SK-N-SH (cell line): ENCODE measurements at regions of chr3 and their contacts with region 1.

Region 1: DNA sequence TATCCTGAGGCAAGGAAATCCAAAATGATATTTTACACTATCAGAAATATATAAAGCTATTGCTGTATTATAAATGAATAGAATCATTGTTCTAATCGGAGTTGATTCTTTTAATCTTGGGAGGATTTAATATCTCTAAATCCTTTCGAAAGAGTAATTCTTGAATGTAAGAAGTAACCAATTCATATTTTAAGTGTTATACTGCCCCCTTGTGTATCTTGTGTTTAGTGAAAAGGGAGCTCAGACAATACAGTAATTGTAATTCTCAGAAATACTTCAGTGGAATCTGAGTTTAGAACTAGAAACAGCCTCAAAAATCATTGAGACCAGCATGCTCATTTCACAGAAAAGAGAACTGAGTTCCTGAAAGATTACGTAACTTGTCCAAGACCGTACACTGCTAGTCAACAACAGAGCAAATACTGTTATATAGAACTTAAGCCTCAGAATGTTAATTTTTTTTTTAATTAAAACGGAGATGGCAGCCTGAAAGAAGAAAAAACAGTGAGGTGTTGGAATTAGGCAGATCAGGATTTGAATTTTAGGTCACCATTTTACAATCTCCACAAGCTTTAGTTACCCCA is 42.9 kb downstream of the PLCH1 start:
- DNase-seq: peak; percentile 43
- H3K4me3 ChIP-seq: no peak overlapping the region; a peak in 1 of 4 replicates
- H3K27ac ChIP-seq: no peak overlapping the region
- H3K4me1 ChIP-seq: peaks cover 0 to 3% of the 10 kb centered on the region in 2 experiments; a peak in 2 of 4 replicates
- H3K27me3 ChIP-seq: no peaks in the 10 kb centered on the region
- CTCF ChIP-seq: peak; percentile 82
- EP300 ChIP-seq: no peak
- RAD21 ChIP-seq: peak; percentile 82

Region 2: DNA sequence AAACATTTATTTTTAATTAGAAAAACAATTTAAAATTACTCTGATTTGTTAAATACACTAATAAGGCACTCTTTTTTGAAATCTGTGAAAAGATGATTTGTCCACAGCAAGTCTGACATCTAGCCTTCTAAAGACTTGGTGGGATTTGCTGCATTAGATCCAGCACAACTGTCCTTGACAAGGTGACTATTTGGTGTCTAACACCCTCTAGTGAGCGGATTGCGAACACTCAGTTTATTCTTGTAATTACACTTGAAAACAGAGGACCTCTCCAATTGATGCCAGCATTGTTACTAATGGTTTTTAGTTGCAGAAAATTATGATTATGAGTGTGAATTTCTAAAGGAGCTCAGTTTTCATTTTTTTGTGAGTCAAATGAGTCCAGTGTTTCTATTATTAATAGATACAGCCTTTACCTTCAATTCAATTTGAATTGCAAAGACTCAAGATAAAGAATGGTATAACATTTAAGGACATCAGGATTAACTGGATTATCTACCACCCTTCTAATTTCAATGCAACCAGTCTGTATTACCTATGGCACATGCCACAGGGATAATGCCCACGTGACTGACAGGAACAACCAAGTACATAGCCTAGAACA is 378.8 kb before region 1 on chr3:
- CTCF ChIA-PET with region 1: interaction called, 14 read pairs
- POLR2A ChIA-PET with region 1: no interaction called
- DNase-seq: peak; percentile 61
- H3K4me3 ChIP-seq: no peak overlapping the region; a peak in 1 of 4 replicates
- H3K27ac ChIP-seq: no peak overlapping the region
- H3K4me1 ChIP-seq: peaks cover 0 to 8% of the 10 kb centered on the region in 2 experiments; a peak in 2 of 4 replicates
- H3K27me3 ChIP-seq: no peaks in the 10 kb centered on the region
- CTCF ChIP-seq: peak; percentile 83
- EP300 ChIP-seq: no peak
- RAD21 ChIP-seq: peak; percentile 95

Region 3: DNA sequence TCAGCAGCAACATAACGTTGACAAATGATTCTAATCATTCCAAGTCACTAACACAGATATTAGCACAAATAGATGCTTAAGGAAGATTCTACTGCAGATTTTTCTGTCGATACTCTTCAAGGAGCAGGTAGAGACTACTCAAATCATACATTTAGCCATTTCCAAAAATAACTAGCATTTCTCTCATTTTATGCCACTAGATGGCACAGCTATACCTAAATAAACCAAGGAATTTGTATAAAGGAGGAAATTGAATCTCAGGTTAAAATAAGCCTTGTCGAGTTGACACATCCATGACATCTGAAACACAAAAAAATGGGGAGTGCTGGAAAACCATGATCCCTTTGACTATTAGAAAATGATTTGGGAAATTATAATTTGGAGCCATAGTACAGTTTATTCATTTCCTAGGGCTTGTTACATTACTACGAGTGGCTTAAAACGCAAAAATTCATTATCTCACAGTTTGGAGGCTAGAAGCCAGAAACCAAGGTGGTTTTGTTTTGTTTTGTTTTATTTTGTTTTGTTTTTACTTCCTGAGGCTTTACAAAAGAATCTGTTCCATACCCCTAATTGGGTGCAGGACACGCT is 349.0 kb before region 1 on chr3:
- CTCF ChIA-PET with region 1: interaction called, 86 read pairs
- POLR2A ChIA-PET with region 1: no interaction called
- DNase-seq: peak; percentile 31
- H3K4me3 ChIP-seq: no peak overlapping the region
- H3K27ac ChIP-seq: no peak overlapping the region; a peak in 1 of 4 replicates
- H3K4me1 ChIP-seq: no peaks in the 10 kb centered on the region; a peak in 1 of 4 replicates
- H3K27me3 ChIP-seq: no peaks in the 10 kb centered on the region
- CTCF ChIP-seq: peak; percentile 71
- EP300 ChIP-seq: no peak
- RAD21 ChIP-seq: peak; percentile 76

Region 4: GRCh38 chr3:155382396-155383042 is 319.5 kb before region 1 on chr3:
- CTCF ChIA-PET with region 1: interaction called, 124 read pairs
- POLR2A ChIA-PET with region 1: no interaction called
- DNase-seq: peak; percentile 69
- H3K4me3 ChIP-seq: peak overlapping the region in 1 of 2 experiments; percentile 32; a peak in 1 of 4 replicates
- H3K27ac ChIP-seq: peak overlapping the region in 1 of 2 experiments; percentile 67; a peak in 1 of 4 replicates
- H3K4me1 ChIP-seq: peaks cover 0 to 20% of the 10 kb centered on the region in 2 experiments; a peak in 1 of 4 replicates
- H3K27me3 ChIP-seq: no peaks in the 10 kb centered on the region
- CTCF ChIP-seq: peak; percentile 85
- EP300 ChIP-seq: no peak
- RAD21 ChIP-seq: peak; percentile 99

Region 5: GRCh38 chr3:155618543-155618942 is 83.4 kb before region 1 on chr3:
- CTCF ChIA-PET with region 1: no interaction called
- POLR2A ChIA-PET with region 1: no interaction called
- DNase-seq: no peak
- H3K4me3 ChIP-seq: no peak overlapping the region
- H3K27ac ChIP-seq: no peak overlapping the region
- H3K4me1 ChIP-seq: no peaks in the 10 kb centered on the region
- H3K27me3 ChIP-seq: no peaks in the 10 kb centered on the region
- CTCF ChIP-seq: no peak
- EP300 ChIP-seq: no peak
- RAD21 ChIP-seq: no peak

Region 6: GRCh38 chr3:155631323-155632019 is 70.5 kb before region 1 on chr3:
- CTCF ChIA-PET with region 1: no interaction called
- POLR2A ChIA-PET with region 1: no interaction called
- DNase-seq: no peak
- H3K4me3 ChIP-seq: no peak overlapping the region
- H3K27ac ChIP-seq: no peak overlapping the region
- H3K4me1 ChIP-seq: no peaks in the 10 kb centered on the region
- H3K27me3 ChIP-seq: no peaks in the 10 kb centered on the region
- CTCF ChIP-seq: no peak
- EP300 ChIP-seq: no peak
- RAD21 ChIP-seq: no peak

Region 7: GRCh38 chr3:155682426-155683343 is 19.3 kb before region 1 on chr3:
- CTCF ChIA-PET with region 1: interaction called, 13 read pairs
- POLR2A ChIA-PET with region 1: no interaction called
- DNase-seq: no peak
- H3K4me3 ChIP-seq: no peak overlapping the region
- H3K27ac ChIP-seq: no peak overlapping the region
- H3K4me1 ChIP-seq: peaks cover 0 to 3% of the 10 kb centered on the region in 2 experiments; a peak in 2 of 4 replicates
- H3K27me3 ChIP-seq: no peaks in the 10 kb centered on the region
- CTCF ChIP-seq: no peak
- EP300 ChIP-seq: no peak
- RAD21 ChIP-seq: no peak

Region 8: GRCh38 chr3:155737844-155738460 is 36.0 kb after region 1 on chr3:
- CTCF ChIA-PET with region 1: interaction called, 16 read pairs
- POLR2A ChIA-PET with region 1: no interaction called
- DNase-seq: no peak
- H3K4me3 ChIP-seq: no peak overlapping the region
- H3K27ac ChIP-seq: no peak overlapping the region
- H3K4me1 ChIP-seq: no peaks in the 10 kb centered on the region
- H3K27me3 ChIP-seq: peaks cover 5% of the 10 kb centered on the region; the same call in 1 of the 2 replicates
- CTCF ChIP-seq: no peak
- EP300 ChIP-seq: no peak
- RAD21 ChIP-seq: no peak